Caco-2 (cell line): ENCODE measurements at regions of chr3 and their contacts with region 1.

Region 1: DNA sequence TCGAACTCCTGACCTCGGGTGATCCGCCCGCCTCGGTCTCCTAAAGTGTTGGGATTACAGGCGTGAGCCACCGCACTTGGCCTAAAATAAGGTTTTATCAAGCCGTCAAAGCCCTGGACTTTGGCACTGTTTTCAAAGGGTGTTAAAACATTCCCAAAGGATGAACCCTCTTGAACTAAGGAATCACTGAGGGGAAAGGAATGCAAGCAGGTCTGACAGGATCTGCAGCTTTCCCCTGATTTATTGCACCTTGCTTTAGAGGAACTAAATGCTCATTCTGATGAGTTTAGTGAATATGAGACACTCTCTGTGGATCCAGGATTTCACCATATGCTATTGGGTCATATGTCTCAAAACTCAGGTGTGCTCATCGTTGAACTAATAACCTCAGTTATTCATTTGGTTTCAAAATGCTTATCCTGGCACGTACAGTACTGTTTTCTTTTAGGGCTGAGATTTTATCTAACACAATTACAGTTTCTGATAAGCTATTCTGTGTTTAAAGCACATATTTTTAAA is 63.0 kb upstream of the TSC22D2 start:
- DNase-seq: peak; percentile 92 to 95
- H3K4me3 ChIP-seq: no peak overlapping the region
- H3K4me3 Mint-ChIP-seq: peak overlapping the region; percentile 58
- H3K27ac Mint-ChIP-seq: peak overlapping the region; percentile 66
- H3K4me1 ChIP-seq: peaks cover 57% of the 10 kb centered on the region
- H3K4me1 Mint-ChIP-seq: peaks cover 40% of the 10 kb centered on the region
- H3K27me3 ChIP-seq: no peaks in the 10 kb centered on the region
- H3K27me3 Mint-ChIP-seq: no peaks in the 10 kb centered on the region
- CTCF ChIP-seq: no peak

Region 2: DNA sequence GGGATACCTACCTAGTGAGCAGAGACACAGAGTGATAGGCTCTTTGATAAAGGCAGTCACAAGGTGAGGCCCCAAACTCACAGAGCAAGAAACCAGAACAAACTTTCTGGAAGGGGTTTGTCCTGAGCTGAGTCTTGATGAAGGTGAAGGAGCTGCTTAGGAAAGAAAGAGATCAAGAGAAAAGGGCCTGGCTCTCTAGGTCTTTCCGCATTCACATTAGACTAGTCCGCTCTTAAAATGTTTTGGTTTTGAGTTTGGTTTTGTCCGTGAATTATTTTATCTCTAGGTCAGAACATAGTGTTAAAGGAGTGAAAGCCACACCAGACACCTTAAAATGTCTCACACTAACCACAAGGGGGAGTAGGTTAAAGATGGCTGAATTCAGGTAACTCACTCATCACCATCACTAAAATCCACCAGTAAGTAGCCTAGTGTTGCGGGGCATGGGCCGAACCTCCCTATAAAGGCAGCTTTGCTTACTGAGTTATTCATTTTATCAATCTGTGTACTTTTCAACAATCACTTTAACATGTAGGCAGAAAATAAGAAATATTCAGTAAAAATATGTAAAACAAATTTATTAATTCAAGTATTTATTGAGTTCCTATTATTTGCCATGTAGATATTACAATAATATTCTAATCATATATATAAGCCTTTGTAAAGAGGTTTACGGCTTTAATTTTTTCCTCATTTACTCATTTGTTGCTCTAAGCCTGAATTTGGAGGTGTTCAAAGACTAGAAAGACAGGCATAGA is 58.5 kb before region 1 on chr3:
- CTCF ChIA-PET with region 1: no interaction called
- POLR2A ChIA-PET with region 1: no interaction called
- intact Hi-C with region 1: loop called (anchors 1 kb)
- DNase-seq: peak in 1 of 2 experiments; percentile 51
- H3K4me3 ChIP-seq: no peak overlapping the region
- H3K4me3 Mint-ChIP-seq: no peak overlapping the region
- H3K27ac Mint-ChIP-seq: peak overlapping the region; percentile 77
- H3K4me1 ChIP-seq: peaks cover 12% of the 10 kb centered on the region
- H3K4me1 Mint-ChIP-seq: no peaks in the 10 kb centered on the region
- H3K27me3 ChIP-seq: no peaks in the 10 kb centered on the region
- H3K27me3 Mint-ChIP-seq: no peaks in the 10 kb centered on the region
- CTCF ChIP-seq: peak; percentile 57 to 71

Region 3: GRCh38 chr3:150314248-150315004 is 30.7 kb before region 1 on chr3:
- CTCF ChIA-PET with region 1: no interaction called
- POLR2A ChIA-PET with region 1: no interaction called
- intact Hi-C with region 1: loop called (anchors 1 kb)
- DNase-seq: peak; percentile 58 to 73
- H3K4me3 ChIP-seq: no peak overlapping the region
- H3K4me3 Mint-ChIP-seq: no peak overlapping the region
- H3K27ac Mint-ChIP-seq: no peak overlapping the region
- H3K4me1 ChIP-seq: peaks cover 33% of the 10 kb centered on the region
- H3K4me1 Mint-ChIP-seq: peaks cover 31% of the 10 kb centered on the region
- H3K27me3 ChIP-seq: no peaks in the 10 kb centered on the region
- H3K27me3 Mint-ChIP-seq: no peaks in the 10 kb centered on the region
- CTCF ChIP-seq: no peak

Region 4: GRCh38 chr3:150319904-150320303 is 25.2 kb before region 1 on chr3:
- CTCF ChIA-PET with region 1: no interaction called
- POLR2A ChIA-PET with region 1: no interaction called
- intact Hi-C with region 1: loop called (anchors 1 kb)
- DNase-seq: peak; percentile 65 to 70
- H3K4me3 ChIP-seq: no peak overlapping the region
- H3K4me3 Mint-ChIP-seq: peak overlapping the region; percentile 27
- H3K27ac Mint-ChIP-seq: peak overlapping the region; percentile 29
- H3K4me1 ChIP-seq: peaks cover 53% of the 10 kb centered on the region
- H3K4me1 Mint-ChIP-seq: peaks cover 53% of the 10 kb centered on the region
- H3K27me3 ChIP-seq: no peaks in the 10 kb centered on the region
- H3K27me3 Mint-ChIP-seq: no peaks in the 10 kb centered on the region
- CTCF ChIP-seq: no peak

Region 5: DNA sequence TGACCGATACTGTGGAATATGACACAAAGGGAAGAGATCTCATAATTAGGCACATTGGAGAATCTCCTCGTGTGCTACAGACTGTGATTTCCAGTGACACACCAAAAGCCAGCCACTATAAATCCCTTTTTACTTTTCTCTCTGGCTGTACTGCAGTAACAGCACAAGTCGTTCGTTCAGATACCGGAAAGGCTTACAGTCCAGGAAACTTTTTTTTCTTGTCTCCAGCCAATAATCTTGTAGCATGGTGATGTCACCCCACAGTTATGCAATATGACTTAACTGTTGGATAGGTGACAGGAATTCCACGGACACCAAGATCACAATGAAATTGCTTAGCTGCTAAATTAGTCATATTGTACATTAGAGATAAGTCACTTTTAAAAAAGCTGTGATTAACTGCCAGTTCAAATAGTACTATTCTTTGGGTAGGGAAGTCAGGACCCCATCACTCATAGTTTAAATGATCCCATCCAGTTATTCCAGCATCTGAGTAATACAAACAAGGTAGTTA is 26.7 kb after region 1 on chr3:
- CTCF ChIA-PET with region 1: interaction called, 3 read pairs
- POLR2A ChIA-PET with region 1: no interaction called
- intact Hi-C with region 1: loop called (anchors 1 kb)
- DNase-seq: peak; percentile 72 to 78
- H3K4me3 ChIP-seq: peak overlapping the region; percentile 43
- H3K4me3 Mint-ChIP-seq: peak overlapping the region; percentile 71
- H3K27ac Mint-ChIP-seq: peak overlapping the region; percentile 86
- H3K4me1 ChIP-seq: peaks cover 46% of the 10 kb centered on the region
- H3K4me1 Mint-ChIP-seq: peaks cover 23% of the 10 kb centered on the region
- H3K27me3 ChIP-seq: no peaks in the 10 kb centered on the region
- H3K27me3 Mint-ChIP-seq: no peaks in the 10 kb centered on the region
- CTCF ChIP-seq: no peak